ENCODE measurements at regions of chr3 and their contacts with region 1.

Region 1: GRCh38 chr3:79032686-79033318 is 735.0 kb downstream of the ROBO1 start:
- DNase-seq: no peak
- CTCF ChIP-seq: peak; percentile 43

Region 2: DNA sequence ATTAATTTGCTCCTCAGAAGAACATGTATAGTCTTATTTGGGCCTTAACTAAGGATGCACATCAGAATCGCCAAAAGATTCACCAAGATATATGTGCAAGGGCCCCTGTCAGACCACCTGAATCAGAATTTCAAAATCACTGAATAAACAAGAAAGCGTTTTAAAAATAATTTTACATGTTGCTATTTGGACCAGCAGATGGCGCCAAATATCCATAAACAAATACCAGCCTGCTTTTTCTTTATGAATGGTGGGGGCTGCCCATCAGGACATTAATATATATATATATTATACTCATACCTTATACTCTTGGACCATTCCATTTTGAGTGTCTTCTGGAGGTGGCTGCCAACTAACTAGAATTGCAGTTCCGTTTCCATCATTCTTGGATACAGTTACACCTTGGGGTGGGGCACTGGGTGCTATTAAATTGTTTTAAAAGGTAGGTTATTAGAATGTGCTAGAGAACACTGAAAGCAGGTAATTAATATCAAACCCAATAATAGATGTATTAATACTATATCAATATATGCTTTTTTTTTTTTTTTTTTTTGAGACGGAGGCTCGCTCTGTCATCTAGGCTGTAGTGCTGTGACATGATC is 373.3 kb before region 1 on chr3:
- CTCF ChIA-PET with region 1: interaction called, 27 read pairs
- POLR2A ChIA-PET with region 1: no interaction called
- DNase-seq: peak; percentile 11
- CTCF ChIP-seq: peak; percentile 33

Region 3: DNA sequence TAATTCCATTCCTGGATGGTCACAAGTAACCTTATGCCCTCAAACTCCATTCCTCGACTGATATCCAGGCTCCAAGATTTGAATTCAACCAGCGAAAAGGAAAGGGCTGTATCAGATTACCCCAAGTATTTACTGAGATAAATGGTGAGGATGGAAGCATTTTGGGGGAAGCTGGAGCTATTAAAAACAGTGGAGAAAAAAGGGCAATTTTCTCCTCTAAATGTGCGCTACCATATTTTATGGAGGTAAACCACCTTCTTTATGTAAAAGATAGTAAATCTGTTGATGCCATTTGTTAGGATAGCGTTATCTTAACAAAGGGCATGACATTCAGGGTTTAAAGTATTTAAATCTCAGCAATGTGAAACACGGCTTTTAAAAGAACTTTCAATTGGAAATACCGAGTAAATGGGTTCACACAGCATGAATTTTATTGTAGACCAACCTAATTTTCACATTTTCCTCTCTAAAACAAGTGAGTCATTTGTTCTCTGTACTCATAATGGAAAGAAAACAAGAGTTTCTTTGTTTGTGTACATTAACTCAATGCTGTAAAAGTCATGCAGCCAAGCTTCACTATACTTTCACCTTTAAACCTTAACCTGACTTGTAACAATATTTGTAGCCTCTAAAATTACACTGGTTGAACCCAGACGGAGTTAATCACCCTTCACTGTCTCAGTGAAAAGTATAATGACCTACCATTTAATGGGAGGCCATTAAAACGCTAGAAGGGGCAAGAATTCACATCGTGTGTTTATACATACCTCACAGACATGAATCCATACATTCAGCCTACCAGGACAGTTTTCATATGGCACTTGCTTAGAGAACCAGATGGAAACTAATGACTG is 38.4 kb before region 1 on chr3:
- CTCF ChIA-PET with region 1: no interaction called
- POLR2A ChIA-PET with region 1: no interaction called
- DNase-seq: no peak
- CTCF ChIP-seq: no peak

Measured in GM10248 (cell line).